ENCODE measurements at regions of chr1 and their contacts with region 1.

Region 1: DNA sequence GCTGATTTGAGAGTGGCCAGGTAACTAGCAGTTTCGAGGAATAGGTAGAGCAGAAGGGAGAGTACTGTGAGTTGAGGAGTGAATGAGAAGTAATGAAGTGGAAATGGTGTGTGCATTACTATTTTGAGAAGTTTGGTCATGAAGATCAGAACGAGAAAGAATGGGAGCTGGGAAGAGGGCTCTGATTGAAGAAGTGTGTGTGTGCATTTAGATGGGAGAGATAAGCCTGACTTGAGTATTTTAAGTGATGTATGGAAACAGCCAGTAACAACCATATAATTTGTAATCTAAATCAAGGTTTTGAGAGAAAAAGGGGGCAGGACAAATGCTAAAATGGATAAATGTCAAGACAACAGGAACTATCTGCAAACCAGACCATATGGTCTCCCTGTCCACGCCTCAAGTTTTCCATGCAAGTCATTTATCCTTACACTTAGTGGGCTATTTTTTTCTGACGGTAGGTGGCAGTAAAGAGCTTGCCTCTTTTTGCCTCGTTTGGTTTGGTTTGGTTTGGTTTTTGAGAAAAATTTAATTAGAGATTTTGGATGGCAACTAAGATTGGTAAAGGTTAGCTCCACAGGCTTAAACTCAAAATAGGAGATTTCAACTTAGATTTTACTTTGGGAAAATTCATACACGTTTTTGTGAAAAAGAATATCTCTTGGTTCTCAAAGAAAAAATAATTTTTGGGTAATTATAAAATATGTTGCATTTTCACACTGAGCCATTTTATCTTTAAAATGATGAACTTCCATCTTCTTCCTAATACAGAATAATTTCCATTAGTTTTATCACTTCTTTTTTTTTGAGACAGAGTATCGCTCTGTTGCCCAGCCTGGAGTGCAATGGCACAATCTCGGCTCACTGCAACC is 9.5 kb upstream of the B3GALNT2 start:
- DNase-seq: peak in 5 of 7 donors; percentile 29 to 67 (median 47)
- H3K4me3 ChIP-seq: no peak overlapping the region
- H3K27ac ChIP-seq: no peak overlapping the region
- H3K4me1 ChIP-seq: no peaks in the 10 kb centered on the region
- H3K27me3 ChIP-seq: no peaks in the 10 kb centered on the region
- CTCF ChIP-seq: peak; percentile 80 to 99 (median 90)
- POLR2A ChIP-seq: no peak

Region 2: GRCh38 chr1:235783148-235783776 is 269.5 kb after region 1 on chr1:
- intact Hi-C with region 1: loop called (anchors 5 to 10 kb)
- DNase-seq: no peak
- H3K4me3 ChIP-seq: no peak overlapping the region
- H3K27ac ChIP-seq: no peak overlapping the region
- H3K4me1 ChIP-seq: no peaks in the 10 kb centered on the region
- H3K27me3 ChIP-seq: no peaks in the 10 kb centered on the region
- CTCF ChIP-seq: peak; percentile 12 to 62 (median 42)
- POLR2A ChIP-seq: no peak

Measured in adrenal gland (tissue), 19 donors.